ENCODE measurements at regions of chr19 and their contacts with region 1.

Region 1: DNA sequence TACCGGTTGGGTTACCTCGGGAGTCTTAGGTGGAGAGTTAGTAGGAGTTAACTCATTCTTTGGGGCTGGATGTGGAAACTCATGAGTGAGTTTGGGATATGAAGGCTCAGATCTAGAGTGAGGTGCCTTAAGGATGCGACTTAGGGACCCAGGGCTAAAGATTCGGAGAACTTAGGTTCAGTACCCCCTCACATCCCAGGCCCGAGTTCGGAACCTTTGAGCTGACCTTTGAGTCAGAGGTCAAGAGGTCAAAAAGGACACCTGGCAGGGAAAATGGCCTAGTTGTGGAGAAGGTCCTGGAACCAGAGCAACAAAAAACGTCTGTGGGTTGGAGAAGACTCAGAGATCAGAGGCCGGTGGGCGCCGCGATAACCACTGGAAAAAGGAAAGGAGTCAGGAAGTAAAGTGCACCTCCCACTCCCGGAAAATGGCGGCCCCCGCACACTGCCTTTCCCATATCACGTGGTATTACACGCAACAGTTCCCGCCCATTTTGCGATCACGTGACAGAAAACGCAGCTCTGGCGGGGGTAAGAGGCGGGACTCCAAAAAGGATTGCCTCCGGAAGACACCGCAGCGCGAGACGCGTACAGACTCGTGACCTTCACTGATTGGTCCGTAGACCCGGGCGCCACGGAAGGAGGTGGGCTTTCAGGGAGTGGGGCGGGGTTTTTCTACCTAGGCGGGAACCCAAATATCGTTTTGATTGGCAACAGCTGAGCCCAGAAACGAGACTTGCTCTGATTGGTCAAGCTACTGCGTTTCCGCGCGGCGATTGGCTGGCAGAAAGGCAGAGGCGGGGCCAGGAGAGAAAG is at the start of gene ACTMAP:
- DNase-seq: peak; percentile 97
- ATAC-seq: peak; percentile 93
- H3K4me3 ChIP-seq: peak within 1 kb of the TSS; percentile 74 to 97
- H3K27ac ChIP-seq: peak within 1 kb of the TSS; percentile 99
- H3K4me1 ChIP-seq: peaks cover 10% of the 10 kb centered on the region
- H3K27me3 ChIP-seq: no peaks in the 10 kb centered on the region
- CTCF ChIP-seq: no peak
- total RNA-seq, gene ACTMAP: 5.5 TPM

Region 2: DNA sequence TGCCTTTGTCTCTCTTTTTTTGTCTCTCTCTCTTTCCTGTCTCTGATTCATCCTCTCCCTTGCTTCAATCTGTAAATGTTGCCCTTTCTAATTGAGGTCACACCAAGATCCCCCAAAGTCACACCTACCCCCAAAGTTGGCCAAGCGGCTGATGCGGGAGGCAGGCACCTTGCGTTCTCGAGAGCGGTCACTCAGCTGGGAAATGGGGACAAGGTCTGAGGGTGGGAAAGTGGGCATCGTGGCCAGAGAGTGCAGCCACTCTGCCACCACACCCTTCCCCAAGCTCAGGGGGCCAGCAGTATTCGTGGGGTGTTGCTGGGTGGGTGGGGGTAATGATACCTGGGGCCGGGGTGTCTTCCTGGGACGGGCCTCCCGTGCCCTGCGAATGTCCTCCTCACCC is 36.3 kb before region 1 on chr19:
- CTCF ChIA-PET with region 1: no interaction called
- POLR2A ChIA-PET with region 1: interaction called, 14 read pairs
- in situ Hi-C with region 1: no loop called
- intact Hi-C with region 1: no loop called
- DNase-seq: no peak
- ATAC-seq: no peak
- H3K4me3 ChIP-seq: peak overlapping the region in 1 of 2 experiments; percentile 65; a peak in 1 of 4 replicates
- H3K27ac ChIP-seq: no peak overlapping the region
- H3K4me1 ChIP-seq: peaks cover 11% of the 10 kb centered on the region
- H3K27me3 ChIP-seq: no peaks in the 10 kb centered on the region
- CTCF ChIP-seq: no peak

Measured in Panc1 (cell line).